Activated CD4-positive, alpha-beta T cell treated with anti-CD3 and anti-CD28 coated beads, Interleukin-2, amount 10 ng/mL, durations not matched to agents 24 days and 14 days (primary cell): ENCODE measurements at regions of chr3 and their contacts with region 1.

Region 1: GRCh38 chr3:46098319-46098761 is 71.1 kb upstream of the XCR1 start:
- DNase-seq: peak; percentile 91
- H3K4me3 Mint-ChIP-seq: peak overlapping the region; percentile 71
- H3K27ac Mint-ChIP-seq: peak overlapping the region; percentile 92
- H3K4me1 Mint-ChIP-seq: peaks cover 59% of the 10 kb centered on the region
- H3K27me3 Mint-ChIP-seq: peaks cover 11% of the 10 kb centered on the region

Region 2: GRCh38 chr3:45890405-45890804 is 207.9 kb before region 1 on chr3:
- intact Hi-C with region 1: no loop called
- DNase-seq: no peak
- H3K4me3 Mint-ChIP-seq: no peak overlapping the region
- H3K27ac Mint-ChIP-seq: no peak overlapping the region
- H3K4me1 Mint-ChIP-seq: peaks cover 12% of the 10 kb centered on the region
- H3K27me3 Mint-ChIP-seq: peaks cover 63% of the 10 kb centered on the region

Region 3: GRCh38 chr3:46130631-46131288 is 32.4 kb after region 1 on chr3:
- intact Hi-C with region 1: loop called (anchors 2 kb)
- DNase-seq: no peak
- H3K4me3 Mint-ChIP-seq: no peak overlapping the region
- H3K27ac Mint-ChIP-seq: no peak overlapping the region
- H3K4me1 Mint-ChIP-seq: peaks cover 30% of the 10 kb centered on the region
- H3K27me3 Mint-ChIP-seq: peaks cover 16% of the 10 kb centered on the region

Region 4: DNA sequence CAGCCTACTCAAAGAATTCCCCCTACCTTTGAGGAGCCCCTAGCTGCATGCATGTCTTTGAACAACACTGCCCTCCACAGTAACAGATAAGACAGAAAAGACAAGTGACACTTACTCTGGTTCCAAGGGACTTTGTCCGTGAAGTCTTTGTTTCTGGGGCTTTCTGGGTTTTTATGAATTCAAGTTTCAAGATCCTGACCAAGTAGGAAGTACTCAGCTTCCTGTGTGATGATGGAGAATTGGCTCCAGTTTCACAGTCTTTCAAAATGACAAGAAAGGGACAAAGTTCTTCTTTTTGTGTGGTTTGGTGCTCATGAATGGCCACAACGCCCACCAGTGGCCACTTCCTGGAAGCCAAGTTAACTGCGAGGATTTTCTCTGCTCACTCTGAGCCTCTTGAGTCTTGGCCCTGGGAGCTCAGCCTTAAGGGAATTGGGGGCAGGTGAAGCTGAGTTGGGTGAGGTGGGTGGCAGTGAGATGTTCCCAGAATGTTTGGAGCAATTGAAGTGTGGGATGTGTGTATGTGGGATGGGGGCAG is 109.9 kb after region 1 on chr3 and contains the start of gene CCR1:
- intact Hi-C with region 1: loop called (anchors 1 kb)
- DNase-seq: peak; percentile 89
- H3K4me3 Mint-ChIP-seq: peak within 1 kb of the TSS; percentile 73
- H3K27ac Mint-ChIP-seq: peak within 1 kb of the TSS; percentile 74
- H3K4me1 Mint-ChIP-seq: peaks cover 56% of the 10 kb centered on the region
- H3K27me3 Mint-ChIP-seq: peaks cover 2% of the 10 kb centered on the region
- total RNA-seq, gene CCR1: 5.9 and 6.7 TPM in 2 replicates

Region 5: DNA sequence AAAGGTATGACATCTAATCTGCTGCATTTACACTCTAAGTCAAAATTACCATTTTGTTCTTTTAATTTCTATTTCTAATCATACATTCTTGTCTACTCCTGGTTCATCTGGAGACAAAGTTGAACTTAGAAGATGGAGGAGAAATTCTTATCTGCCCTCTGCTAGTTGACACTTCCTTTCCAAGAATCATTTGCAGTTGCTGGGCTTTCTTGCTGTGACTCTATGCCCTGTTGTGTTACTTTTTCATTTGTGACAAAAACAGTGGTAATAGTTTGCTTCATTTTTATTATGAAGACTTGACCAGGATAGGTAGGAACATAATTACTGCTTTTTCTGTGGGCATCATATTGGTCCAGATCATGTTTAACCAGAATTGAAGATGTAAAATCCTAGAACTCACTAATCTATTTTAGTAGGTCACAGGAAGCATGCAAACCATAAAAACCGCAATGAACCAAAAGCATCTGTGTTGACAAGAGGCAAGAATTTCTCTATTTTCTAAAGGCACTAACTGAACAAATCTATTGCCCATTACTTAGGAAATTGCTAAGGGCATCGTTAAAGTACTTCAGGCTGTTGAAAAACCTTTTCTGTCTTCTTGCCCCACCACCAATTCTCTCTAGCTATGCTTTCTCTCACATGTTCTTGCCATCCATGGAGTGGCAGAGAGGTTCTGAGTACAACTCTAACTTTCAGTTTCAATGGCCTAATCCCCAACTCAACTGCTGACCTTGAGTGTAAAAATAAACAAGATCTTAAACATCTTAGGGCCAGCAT is 251.3 kb after region 1 on chr3:
- intact Hi-C with region 1: loop called (anchors 5 kb)
- DNase-seq: peak; percentile 77
- H3K4me3 Mint-ChIP-seq: peak overlapping the region; percentile 68
- H3K27ac Mint-ChIP-seq: peak overlapping the region; percentile 82
- H3K4me1 Mint-ChIP-seq: peaks cover 64% of the 10 kb centered on the region
- H3K27me3 Mint-ChIP-seq: peaks cover 25% of the 10 kb centered on the region

Region 6: DNA sequence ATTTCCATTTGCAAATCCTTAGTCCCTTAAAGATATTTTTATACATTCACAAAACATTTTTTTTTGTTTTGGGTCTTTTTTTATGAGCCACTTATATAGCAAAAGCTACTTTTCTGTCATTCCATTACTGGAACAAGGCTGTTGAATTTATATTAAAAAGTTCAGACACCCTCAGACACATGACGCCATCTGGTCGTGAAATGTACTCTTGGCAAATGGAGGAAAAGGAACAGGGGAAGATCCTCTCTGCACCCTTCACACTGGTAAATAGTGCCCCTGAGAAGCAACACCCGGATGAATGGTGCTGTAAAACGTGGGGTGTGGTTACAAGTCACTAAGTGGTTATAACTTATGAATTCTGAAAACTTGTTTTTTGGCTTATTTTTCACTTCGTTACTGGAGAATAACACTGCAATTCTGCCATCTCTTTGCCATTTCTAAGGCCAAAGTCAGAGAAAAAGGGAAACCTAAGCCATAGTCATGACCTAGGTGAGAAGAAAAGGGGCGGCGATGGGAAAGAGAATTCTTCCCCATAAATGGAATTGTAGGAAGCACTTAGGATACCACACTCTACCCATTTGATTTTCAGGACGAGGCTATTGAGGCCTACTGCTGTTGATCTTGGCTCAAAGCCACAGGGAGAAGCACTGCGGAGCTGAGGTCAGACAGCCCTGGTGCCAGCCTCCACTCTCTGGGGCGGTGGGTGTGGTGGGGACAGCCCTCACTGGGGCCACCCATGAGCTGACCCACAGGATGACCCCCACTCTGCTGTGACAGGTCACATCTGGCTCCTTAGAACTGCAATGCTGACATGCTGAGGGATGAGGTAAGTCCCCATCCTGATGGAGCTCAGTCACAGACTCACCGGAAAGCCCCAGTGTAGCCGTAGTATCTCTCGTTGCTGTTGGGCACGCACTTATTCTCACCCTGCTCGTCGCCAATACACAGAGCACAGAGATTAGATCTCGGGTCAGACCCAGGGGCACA is 344.5 kb after region 1 on chr3:
- intact Hi-C with region 1: loop called (anchors 5 kb)
- DNase-seq: peak; percentile 85
- H3K4me3 Mint-ChIP-seq: no peak overlapping the region
- H3K27ac Mint-ChIP-seq: no peak overlapping the region
- H3K4me1 Mint-ChIP-seq: peaks cover 25% of the 10 kb centered on the region
- H3K27me3 Mint-ChIP-seq: peaks cover 7% of the 10 kb centered on the region